H1 (cell line): ENCODE measurements at regions of chr17 and their contacts with region 1.

Region 1: DNA sequence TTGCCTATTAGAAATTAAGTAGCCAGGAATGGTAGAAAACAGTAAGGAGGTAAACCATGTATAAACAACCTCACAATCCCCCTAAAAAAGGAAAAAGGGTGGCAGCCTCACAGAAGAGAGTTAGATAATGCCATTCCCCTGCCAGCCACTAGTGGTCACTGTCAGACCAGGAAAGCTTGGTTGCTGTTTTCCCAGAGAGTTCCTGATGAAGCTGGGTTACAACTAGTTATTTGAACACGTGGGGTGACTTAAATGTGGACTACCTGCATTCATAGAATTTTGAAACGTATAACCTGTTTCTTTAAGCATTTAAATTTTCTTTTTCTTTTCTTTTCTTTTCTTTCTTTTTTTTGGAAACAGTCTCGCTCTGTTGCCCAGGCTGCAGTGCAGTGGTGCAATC is 5.8 kb downstream of the GPRC5C start:
- DNase-seq: no peak
- H3K4me3 ChIP-seq: no peak overlapping the region
- H3K27ac ChIP-seq: no peak overlapping the region
- H3K4me1 ChIP-seq: peaks cover 5 to 16% (median 12%) of the 10 kb centered on the region in 4 experiments
- H3K27me3 ChIP-seq: peaks cover 0 to 7% (median 3%) of the 10 kb centered on the region in 4 experiments; a peak in 3 of 7 replicates
- CTCF ChIP-seq: peak; percentile 73 to 97 (median 88)
- EP300 ChIP-seq: no peak
- POLR2A ChIP-seq: no peak
- RAD21 ChIP-seq: peak; percentile 96

Region 2: GRCh38 chr17:74373838-74374606 is 63.7 kb before region 1 on chr17:
- CTCF ChIA-PET with region 1: interaction called, 63 read pairs
- POLR2A ChIA-PET with region 1: interaction called, 5 read pairs
- DNase-seq: no peak
- H3K4me3 ChIP-seq: no peak overlapping the region
- H3K27ac ChIP-seq: no peak overlapping the region
- H3K4me1 ChIP-seq: peaks cover 0 to 6% (median 3%) of the 10 kb centered on the region in 4 experiments; a peak in 6 of 7 replicates
- H3K27me3 ChIP-seq: peaks cover 0 to 1% (median 0%) of the 10 kb centered on the region in 4 experiments; a peak in 4 of 7 replicates
- CTCF ChIP-seq: no peak
- EP300 ChIP-seq: no peak
- POLR2A ChIP-seq: no peak
- RAD21 ChIP-seq: no peak

Region 3: DNA sequence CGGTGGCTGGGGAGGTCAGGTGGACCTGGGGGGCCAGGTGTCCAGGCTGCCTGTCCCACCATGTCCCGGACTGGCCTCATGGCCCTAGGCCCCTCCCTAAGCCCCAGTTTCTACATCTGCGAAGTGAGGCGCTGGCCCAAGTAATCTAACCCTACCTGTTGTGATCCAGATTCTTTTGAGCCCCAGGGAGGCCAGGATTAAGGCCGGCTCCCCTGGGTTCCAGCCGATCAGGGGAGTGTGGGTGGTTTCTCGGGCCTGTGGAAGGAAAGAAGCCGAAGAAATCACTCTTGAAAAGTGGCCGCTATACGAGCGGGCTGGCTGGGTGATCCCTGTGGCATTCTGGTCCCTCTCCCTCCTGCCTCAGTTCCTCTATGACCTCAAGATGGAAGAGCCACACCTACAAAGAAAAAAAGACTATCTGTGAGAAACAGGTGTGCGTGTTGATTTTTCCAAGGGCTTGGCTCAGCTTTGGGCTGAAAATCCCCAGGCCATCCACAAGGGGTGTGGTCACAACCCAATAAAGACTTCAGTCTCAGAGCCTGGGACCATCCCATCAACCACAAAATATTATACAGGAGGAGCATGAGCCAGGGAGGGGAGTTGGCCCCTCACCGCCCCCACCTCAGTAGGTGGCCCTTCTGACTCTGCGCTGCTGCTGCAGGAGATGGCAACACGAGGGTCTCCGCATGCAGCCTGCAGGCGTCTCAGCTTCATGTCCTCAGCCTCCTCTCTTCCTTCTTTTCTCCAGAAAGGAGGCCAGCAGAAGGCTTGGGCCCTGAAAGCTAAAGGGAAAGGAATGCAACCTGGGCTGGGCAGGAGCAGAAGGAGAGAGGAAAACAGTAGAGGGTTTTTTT is 50.1 kb before region 1 on chr17:
- CTCF ChIA-PET with region 1: interaction called, 12 read pairs
- POLR2A ChIA-PET with region 1: no interaction called
- DNase-seq: no peak
- H3K4me3 ChIP-seq: peak overlapping the region in 2 of 4 experiments; percentile 6 to 11; a peak in 1 of 8 replicates
- H3K27ac ChIP-seq: no peak overlapping the region
- H3K4me1 ChIP-seq: peaks cover 5 to 20% (median 12%) of the 10 kb centered on the region in 4 experiments
- H3K27me3 ChIP-seq: no peaks in the 10 kb centered on the region; a peak in 1 of 7 replicates
- CTCF ChIP-seq: peak; percentile 14 to 39 (median 27); a peak in 3 of 4 replicates
- EP300 ChIP-seq: no peak
- POLR2A ChIP-seq: no peak
- RAD21 ChIP-seq: peak; percentile 11 to 12; a peak in 2 of 4 replicates

Region 4: GRCh38 chr17:74394977-74395376 is 42.7 kb before region 1 on chr17:
- CTCF ChIA-PET with region 1: interaction called, 12 read pairs
- POLR2A ChIA-PET with region 1: interaction called, 3 read pairs
- DNase-seq: no peak
- H3K4me3 ChIP-seq: no peak overlapping the region
- H3K27ac ChIP-seq: no peak overlapping the region
- H3K4me1 ChIP-seq: no peaks in the 10 kb centered on the region; a peak in 1 of 7 replicates
- H3K27me3 ChIP-seq: no peaks in the 10 kb centered on the region
- CTCF ChIP-seq: no peak
- EP300 ChIP-seq: no peak
- POLR2A ChIP-seq: no peak
- RAD21 ChIP-seq: no peak

Region 5: GRCh38 chr17:74408262-74408661 is 29.4 kb before region 1 on chr17:
- CTCF ChIA-PET with region 1: interaction called, 10 read pairs
- POLR2A ChIA-PET with region 1: interaction called, 6 read pairs
- DNase-seq: no peak
- H3K4me3 ChIP-seq: no peak overlapping the region
- H3K27ac ChIP-seq: no peak overlapping the region
- H3K4me1 ChIP-seq: peaks cover 3 to 23% (median 14%) of the 10 kb centered on the region in 4 experiments
- H3K27me3 ChIP-seq: no peaks in the 10 kb centered on the region
- CTCF ChIP-seq: peak; percentile 14 to 27 (median 15); a peak in 3 of 4 replicates
- EP300 ChIP-seq: no peak
- POLR2A ChIP-seq: no peak
- RAD21 ChIP-seq: peak; percentile 27 to 52; a peak in 3 of 4 replicates

Region 6: GRCh38 chr17:74424657-74425056 is 13.0 kb before region 1 on chr17:
- CTCF ChIA-PET with region 1: interaction called, 23 read pairs
- POLR2A ChIA-PET with region 1: interaction called, 4 read pairs
- DNase-seq: no peak
- H3K4me3 ChIP-seq: no peak overlapping the region
- H3K27ac ChIP-seq: no peak overlapping the region
- H3K4me1 ChIP-seq: peaks cover 2 to 18% (median 16%) of the 10 kb centered on the region in 4 experiments
- H3K27me3 ChIP-seq: peaks cover 0 to 5% (median under 1%) of the 10 kb centered on the region in 4 experiments; a peak in 3 of 7 replicates
- CTCF ChIP-seq: no peak
- EP300 ChIP-seq: no peak
- POLR2A ChIP-seq: no peak
- RAD21 ChIP-seq: no peak

Region 7: GRCh38 chr17:74807925-74808324 is 370.2 kb after region 1 on chr17:
- CTCF ChIA-PET with region 1: no interaction called
- POLR2A ChIA-PET with region 1: no interaction called
- DNase-seq: no peak
- H3K4me3 ChIP-seq: no peak overlapping the region
- H3K27ac ChIP-seq: no peak overlapping the region
- H3K4me1 ChIP-seq: peaks cover 0 to 4% (median 0%) of the 10 kb centered on the region in 4 experiments; a peak in 1 of 7 replicates
- H3K27me3 ChIP-seq: no peaks in the 10 kb centered on the region; a peak in 1 of 7 replicates
- CTCF ChIP-seq: no peak
- EP300 ChIP-seq: no peak
- POLR2A ChIP-seq: no peak
- RAD21 ChIP-seq: no peak